IMR-90 (cell line): ENCODE measurements at regions of chrX and their contacts with region 1.

Region 1: GRCh38 chrX:35726176-35726575 is 72.0 kb upstream of the MAGEB16 start:
- DNase-seq: peak; percentile 3
- ATAC-seq: no peak
- H3K4me3 ChIP-seq: no peak overlapping the region
- H3K27ac ChIP-seq: no peak overlapping the region
- H3K4me1 ChIP-seq: no peaks in the 10 kb centered on the region
- H3K27me3 ChIP-seq: no peaks in the 10 kb centered on the region
- CTCF ChIP-seq: peak; percentile 36
- POLR2A ChIP-seq: no peak
- RAD21 ChIP-seq: no peak

Region 2: DNA sequence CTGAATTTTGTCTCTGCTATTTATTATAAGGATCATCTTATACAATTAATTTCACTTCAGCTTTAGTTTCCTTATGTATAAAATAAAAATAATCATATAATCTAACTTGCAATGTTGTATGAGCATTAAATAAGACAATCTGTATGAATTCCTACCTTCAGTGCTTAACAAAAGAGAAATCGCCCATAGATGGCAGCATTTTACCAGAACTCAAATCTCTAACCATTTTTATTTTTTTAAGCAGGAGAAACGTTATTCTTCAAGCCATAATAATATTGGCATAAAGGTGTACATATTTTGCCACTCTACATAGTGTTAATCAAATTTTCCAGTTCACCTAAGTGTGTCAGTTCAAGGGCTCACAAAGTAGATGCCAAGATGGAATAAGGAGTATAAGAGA is 1147.9 kb before region 1 on chrX:
- CTCF ChIA-PET with region 1: no interaction called
- POLR2A ChIA-PET with region 1: no interaction called
- dilution Hi-C with region 1: no loop called
- in situ Hi-C with region 1: no loop called
- intact Hi-C with region 1: loop called (anchors 2 kb)
- DNase-seq: peak; percentile 56
- ATAC-seq: peak; percentile 49; the same call in 1 of the 2 replicates
- H3K4me3 ChIP-seq: no peak overlapping the region
- H3K27ac ChIP-seq: no peak overlapping the region
- H3K4me1 ChIP-seq: no peaks in the 10 kb centered on the region
- H3K27me3 ChIP-seq: no peaks in the 10 kb centered on the region
- CTCF ChIP-seq: peak; percentile 61
- POLR2A ChIP-seq: no peak
- RAD21 ChIP-seq: peak; percentile 59